Heart right ventricle (tissue), 16 donors: ENCODE measurements at regions of chr9 and their contacts with region 1.

Region 1: DNA sequence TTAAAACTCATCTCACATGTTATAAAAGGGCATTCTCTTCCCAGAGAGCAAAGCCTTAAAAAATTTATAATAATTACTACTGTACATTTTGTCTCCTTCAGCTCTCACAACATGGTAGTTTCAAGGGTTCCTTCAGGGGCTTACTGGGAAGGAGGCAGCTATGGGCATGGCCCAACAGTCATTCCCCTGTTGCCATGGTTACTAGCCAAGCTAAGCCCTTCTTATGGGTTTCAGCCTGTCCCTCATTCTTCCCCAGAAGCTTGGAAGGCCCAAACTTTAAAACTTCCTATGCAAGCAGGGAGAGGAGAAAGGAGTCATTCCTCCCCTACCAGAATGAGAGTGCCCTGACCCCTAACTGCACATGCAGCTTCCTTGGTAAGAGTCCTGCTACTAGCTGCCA is 82.2 kb upstream of the CNTLN start:
- DNase-seq: no peak
- ATAC-seq: no peak
- H3K4me3 ChIP-seq: no peak overlapping the region
- H3K27ac ChIP-seq: no peak overlapping the region
- H3K4me1 ChIP-seq: no peaks in the 10 kb centered on the region
- H3K27me3 ChIP-seq: no peaks in the 10 kb centered on the region
- CTCF ChIP-seq: no peak

Region 2: DNA sequence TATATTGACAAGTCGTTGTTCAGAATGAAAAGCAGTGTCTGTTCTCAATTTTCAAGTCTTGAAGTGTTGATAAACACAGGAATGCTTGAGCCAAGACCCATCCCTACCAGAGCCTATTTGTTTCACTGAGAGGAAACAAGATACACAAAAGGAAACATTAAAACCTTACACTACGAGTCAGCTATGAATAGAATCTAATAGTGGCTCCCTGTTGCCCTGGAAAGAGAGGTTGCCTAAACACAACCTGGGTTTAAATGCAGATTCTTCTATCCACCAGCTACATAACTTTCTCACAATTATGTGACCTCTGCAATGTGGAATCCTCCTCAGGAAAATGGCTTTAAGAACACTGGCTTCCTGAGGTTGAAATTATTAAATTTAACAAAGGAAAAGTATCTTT is 153.0 kb before region 1 on chr9:
- intact Hi-C with region 1: loop called in 1 of 10 experiments (anchors 10 kb)
- DNase-seq: no peak
- ATAC-seq: no peak
- H3K4me3 ChIP-seq: no peak overlapping the region
- H3K27ac ChIP-seq: no peak overlapping the region
- H3K4me1 ChIP-seq: no peaks in the 10 kb centered on the region
- H3K27me3 ChIP-seq: no peaks in the 10 kb centered on the region
- CTCF ChIP-seq: no peak

Region 3: DNA sequence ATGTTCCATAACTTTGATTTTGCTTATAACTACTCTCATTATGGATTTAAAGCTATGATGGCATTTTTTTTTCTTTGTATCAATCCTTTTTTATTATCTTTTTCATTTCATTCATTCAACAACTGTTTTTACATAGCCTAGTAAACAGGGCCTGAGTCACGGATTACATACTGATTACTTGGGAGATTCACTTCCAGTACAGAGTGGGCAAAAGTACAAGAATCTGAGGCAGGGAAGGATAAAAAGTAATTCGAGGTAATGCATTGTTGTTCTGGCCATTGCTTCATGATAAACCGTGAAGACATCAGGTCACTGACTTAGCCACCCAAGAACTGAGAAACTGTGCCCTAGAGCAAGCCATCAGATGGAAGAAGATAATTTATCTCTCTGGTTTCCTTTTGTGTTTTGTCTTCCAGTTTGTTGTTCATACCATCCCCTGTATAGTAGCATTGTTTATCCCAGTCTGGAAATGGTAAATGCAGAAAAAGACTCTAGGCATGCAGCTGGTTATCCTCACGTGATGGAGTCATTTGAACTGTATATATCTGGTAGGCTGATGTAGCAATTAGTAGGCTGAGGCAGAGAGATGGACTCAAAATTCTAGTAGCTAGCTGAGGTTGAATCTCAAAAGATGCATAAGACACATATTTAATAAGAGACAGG is 227.9 kb after region 1 on chr9:
- intact Hi-C with region 1: no loop called
- DNase-seq: no peak
- ATAC-seq: no peak
- H3K4me3 ChIP-seq: no peak overlapping the region
- H3K27ac ChIP-seq: no peak overlapping the region
- H3K4me1 ChIP-seq: no peaks in the 10 kb centered on the region
- H3K27me3 ChIP-seq: no peaks in the 10 kb centered on the region
- CTCF ChIP-seq: no peak